Activated CD8-positive, alpha-beta memory T cell treated with anti-CD3 and anti-CD28 coated beads, Interleukin-2, amount 10 ng/mL, durations not matched to agents 7 days and 5 days (primary cell): ENCODE measurements at regions of chr12 and their contacts with region 1.

Region 1: DNA sequence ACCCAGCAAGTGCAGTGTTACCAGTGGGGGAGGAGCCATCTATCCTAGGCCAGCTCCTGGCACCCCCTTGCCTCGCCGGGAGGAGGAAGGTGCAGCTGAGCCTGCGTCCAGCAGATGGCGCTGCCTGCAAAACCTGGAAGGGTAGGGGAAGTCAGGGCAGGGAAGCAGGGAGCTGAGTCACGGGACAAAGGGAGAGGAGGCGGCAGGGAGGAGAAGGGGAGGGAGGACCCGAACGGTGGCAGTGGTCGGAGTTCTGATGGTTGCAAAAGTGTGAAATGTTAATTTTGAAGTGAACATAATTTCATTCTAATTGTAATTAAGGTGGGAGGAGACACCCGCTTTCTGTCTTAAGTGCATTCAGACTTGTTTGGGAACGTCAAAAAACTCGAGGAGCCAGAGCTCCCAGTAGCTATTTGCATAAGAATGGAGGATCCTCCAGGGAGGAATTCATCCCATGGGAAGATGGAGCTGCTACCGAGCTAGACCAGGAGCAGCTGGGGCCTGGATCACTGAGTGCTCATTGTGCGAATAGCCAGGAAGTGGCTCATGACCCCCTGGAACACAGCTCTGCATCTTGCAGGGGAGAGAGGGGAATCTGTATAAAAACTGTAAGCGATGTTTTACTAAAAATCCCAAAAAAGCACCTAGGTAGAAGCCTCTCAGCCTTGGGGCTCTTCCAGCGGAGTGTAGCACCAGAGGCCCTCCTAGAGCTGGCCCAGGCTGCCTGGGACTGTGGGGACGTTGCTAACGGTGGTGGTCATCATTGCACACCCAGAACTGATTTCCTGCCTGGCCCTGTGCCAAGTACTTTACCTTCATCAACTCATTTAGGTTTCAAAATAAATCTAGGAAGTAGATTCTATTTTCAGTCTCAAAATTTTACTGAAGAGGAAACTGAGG is 59.5 kb downstream of the EMP1 start:
- DNase-seq: peak; percentile 83
- ATAC-seq: peak; percentile 99
- H3K4me3 Mint-ChIP-seq: no peak overlapping the region
- H3K27ac Mint-ChIP-seq: no peak overlapping the region
- H3K4me1 Mint-ChIP-seq: peaks cover 2% of the 10 kb centered on the region
- H3K27me3 Mint-ChIP-seq: peaks cover 10% of the 10 kb centered on the region

Region 2: GRCh38 chr12:12916135-12916944 is 339.7 kb before region 1 on chr12:
- CTCF ChIA-PET with region 1: interaction called, 16 read pairs
- DNase-seq: peak; percentile 91
- ATAC-seq: peak; percentile 99
- H3K4me3 Mint-ChIP-seq: no peak overlapping the region
- H3K27ac Mint-ChIP-seq: no peak overlapping the region
- H3K4me1 Mint-ChIP-seq: peaks cover 10% of the 10 kb centered on the region
- H3K27me3 Mint-ChIP-seq: peaks cover 35% of the 10 kb centered on the region

Region 3: GRCh38 chr12:13233830-13234641 is 22.0 kb before region 1 on chr12:
- CTCF ChIA-PET with region 1: interaction called, 23 read pairs
- DNase-seq: peak; percentile 48
- ATAC-seq: no peak
- H3K4me3 Mint-ChIP-seq: no peak overlapping the region
- H3K27ac Mint-ChIP-seq: no peak overlapping the region
- H3K4me1 Mint-ChIP-seq: no peaks in the 10 kb centered on the region
- H3K27me3 Mint-ChIP-seq: peaks cover 31% of the 10 kb centered on the region

Region 4: GRCh38 chr12:13278249-13278787 is 22.3 kb after region 1 on chr12:
- CTCF ChIA-PET with region 1: interaction called, 21 read pairs
- DNase-seq: peak; percentile 54
- ATAC-seq: peak; percentile 88
- H3K4me3 Mint-ChIP-seq: no peak overlapping the region
- H3K27ac Mint-ChIP-seq: no peak overlapping the region
- H3K4me1 Mint-ChIP-seq: no peaks in the 10 kb centered on the region
- H3K27me3 Mint-ChIP-seq: peaks cover 37% of the 10 kb centered on the region

Region 5: DNA sequence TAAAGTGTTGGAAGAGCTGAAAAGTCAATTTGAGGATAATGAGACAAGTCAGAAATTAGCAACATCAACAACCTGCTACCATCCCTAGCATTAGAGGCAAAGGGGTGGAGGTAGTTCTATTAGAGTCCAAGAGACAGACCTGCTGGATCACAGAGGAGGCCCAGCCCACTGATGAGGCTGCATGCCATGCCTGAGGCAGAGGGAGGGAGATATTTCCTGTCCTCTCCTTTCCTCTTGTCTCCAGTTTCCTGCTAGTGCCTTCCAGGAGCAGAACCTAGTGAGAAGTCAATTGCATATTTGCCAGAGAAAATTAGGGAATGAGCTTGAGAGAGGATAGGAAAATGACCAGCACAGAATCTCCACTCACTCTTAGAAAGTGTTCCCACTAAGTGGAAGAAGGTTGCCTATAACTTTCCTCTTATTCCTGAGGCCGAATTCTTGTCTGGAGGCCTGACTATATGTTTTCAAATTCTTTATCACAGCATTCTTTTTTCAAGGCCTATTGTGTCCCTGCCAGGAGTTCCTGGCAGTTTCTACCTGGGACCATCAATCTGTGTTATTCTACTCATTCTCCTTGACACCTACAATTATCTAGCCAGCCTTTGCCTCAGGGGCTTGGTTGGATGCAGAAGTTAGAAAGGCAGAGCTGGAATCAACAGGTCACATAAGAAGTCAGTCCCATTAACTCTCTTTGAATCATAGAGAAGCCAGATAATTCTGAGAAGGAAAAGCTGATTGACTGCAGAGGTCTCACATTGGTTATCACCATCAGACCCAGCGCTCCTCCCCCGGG is 62.4 kb after region 1 on chr12:
- CTCF ChIA-PET with region 1: no interaction called
- DNase-seq: no peak
- ATAC-seq: no peak
- H3K4me3 Mint-ChIP-seq: no peak overlapping the region
- H3K27ac Mint-ChIP-seq: no peak overlapping the region
- H3K4me1 Mint-ChIP-seq: no peaks in the 10 kb centered on the region
- H3K27me3 Mint-ChIP-seq: peaks cover 46% of the 10 kb centered on the region